Sigmoid colon (tissue), 7 donors: ENCODE measurements at regions of chr17 and their contacts with region 1.

Region 1: GRCh38 chr17:40062329-40063186 is at the start of gene THRA:
- DNase-seq: peak; percentile 88
- H3K4me3 ChIP-seq: peak within 1 kb of the TSS; percentile 87 to 98 (median 95)
- H3K27ac ChIP-seq: peak within 1 kb of the TSS; percentile 96 to 99 (median 98)
- H3K4me1 ChIP-seq: peaks cover 0 to 84% (median 64%) of the 10 kb centered on the region in 4 donors
- H3K27me3 ChIP-seq: no peaks in the 10 kb centered on the region
- CTCF ChIP-seq: peak in 1 of 4 experiments; percentile 22
- EP300 ChIP-seq: no peak
- POLR2A ChIP-seq: no peak
- total RNA-seq, gene THRA: 78.8 to 86.1 (median 83.8) TPM

Region 2: GRCh38 chr17:39487946-39488345 is 574.6 kb before region 1 on chr17:
- intact Hi-C with region 1: no loop called
- DNase-seq: no peak
- H3K4me3 ChIP-seq: no peak overlapping the region
- H3K27ac ChIP-seq: no peak overlapping the region
- H3K4me1 ChIP-seq: no peaks in the 10 kb centered on the region
- H3K27me3 ChIP-seq: no peaks in the 10 kb centered on the region
- CTCF ChIP-seq: no peak
- EP300 ChIP-seq: no peak
- POLR2A ChIP-seq: no peak

Region 3: DNA sequence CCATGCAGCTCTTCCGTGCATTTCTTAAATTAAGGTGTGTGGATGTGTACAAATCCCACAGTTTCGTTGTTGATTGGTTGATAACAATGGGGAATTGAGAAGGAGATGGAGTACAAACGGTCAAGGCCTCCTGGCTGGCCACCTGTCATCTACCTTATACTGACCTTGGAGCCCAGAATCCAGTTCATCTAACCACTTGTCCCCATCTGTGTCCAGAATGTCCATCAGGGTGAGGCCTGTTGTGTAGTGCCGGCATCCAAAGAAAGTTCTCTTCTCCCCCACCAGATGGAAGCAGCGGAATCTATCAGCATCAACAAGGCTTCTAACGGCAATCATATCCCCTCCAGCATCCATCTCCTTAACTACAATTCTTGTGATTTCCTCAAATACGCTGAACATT is 145.6 kb before region 1 on chr17:
- intact Hi-C with region 1: no loop called
- DNase-seq: no peak
- H3K4me3 ChIP-seq: no peak overlapping the region
- H3K27ac ChIP-seq: no peak overlapping the region
- H3K4me1 ChIP-seq: no peaks in the 10 kb centered on the region
- H3K27me3 ChIP-seq: no peaks in the 10 kb centered on the region
- CTCF ChIP-seq: no peak
- EP300 ChIP-seq: no peak
- POLR2A ChIP-seq: no peak

Region 4: DNA sequence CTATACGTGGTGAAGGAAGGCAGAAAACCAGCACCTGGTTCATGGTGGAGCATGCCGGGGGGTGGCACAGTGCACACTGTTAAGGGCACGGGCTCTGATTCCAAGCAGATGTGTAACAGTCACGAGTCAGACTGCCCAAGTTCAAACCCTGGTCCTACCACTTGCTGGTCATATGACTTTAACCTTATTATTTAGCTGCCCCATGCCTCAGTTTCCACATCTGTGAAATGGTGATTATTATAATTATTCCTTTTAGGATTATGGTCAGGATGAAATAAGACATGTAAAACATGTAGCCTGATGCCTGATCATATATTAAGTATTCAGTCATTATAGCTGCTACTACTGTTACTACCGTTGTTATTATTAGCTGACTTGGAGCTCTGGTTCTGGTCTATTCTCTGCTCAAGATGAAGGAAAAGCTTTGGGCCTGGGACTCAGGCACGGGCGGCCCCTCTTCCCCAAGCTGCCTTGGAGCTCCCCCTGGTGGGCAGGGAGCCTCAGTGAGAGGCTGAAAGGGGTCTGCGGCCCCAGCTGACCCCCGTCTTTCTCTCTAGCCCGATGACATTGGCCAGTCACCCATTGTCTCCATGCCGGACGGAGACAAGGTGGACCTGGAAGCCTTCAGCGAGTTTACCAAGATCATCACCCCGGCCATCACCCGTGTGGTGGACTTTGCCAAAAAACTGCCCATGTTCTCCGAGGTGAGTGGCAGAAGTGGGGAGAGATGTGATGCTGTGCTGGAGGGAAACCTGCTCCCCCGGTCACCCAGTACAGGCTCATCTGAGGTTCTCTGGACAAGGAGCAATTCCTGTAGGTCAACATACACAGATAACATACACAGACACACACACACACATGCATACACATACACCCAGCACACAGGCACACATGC is 23.8 kb after region 1 on chr17:
- intact Hi-C with region 1: loop called (anchors 2 kb)
- DNase-seq: no peak
- H3K4me3 ChIP-seq: no peak overlapping the region
- H3K27ac ChIP-seq: peak overlapping the region; percentile 21 to 100 (median 69)
- H3K4me1 ChIP-seq: peaks cover 0 to 43% (median 37%) of the 10 kb centered on the region in 4 donors
- H3K27me3 ChIP-seq: no peaks in the 10 kb centered on the region
- CTCF ChIP-seq: peak; percentile 86 to 93 (median 90)
- EP300 ChIP-seq: no peak
- POLR2A ChIP-seq: no peak

Region 5: DNA sequence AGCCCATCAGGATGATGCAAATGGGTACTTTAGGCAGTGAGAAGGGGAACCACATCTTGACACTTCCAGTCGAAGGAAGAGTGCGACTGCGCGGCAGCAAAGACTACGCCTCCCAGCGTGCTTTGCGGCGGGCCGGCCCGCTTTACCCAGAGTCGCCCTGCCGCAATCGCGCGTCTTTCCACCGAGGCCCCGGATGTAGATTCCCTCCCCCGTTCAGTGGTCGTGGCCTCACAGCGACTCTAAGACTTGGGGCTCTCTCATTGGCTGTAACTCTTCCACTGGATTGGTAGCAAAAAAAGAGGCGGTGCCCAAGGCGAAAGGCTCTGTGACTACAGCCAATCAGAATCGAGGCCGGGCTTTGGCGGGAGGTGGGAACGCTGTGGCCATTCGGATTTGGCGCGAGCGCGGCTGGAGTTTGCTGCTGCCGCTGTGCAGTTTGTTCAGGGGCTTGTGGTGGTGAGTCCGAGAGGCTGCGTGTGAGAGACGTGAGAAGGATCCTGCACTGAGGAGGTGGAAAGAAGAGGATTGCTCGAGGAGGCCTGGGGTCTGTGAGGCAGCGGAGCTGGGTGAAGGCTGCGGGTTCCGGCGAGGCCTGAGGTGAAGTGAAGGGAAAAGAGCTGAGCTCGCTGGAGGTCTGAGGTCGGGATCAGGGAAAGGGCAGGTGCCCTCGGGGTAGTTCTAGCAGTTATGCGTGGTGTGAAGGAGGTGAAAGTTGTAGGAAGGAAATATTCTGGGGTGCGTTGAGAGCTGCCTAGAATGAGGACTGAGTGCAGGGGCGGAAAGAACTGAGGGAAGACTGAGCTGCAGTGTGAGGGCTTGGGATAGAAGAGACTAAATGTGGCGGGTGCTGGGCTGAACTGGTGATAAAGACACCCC is 225.2 kb after region 1 on chr17 and contains the start of gene CDC6:
- intact Hi-C with region 1: no loop called
- DNase-seq: peak; percentile 99
- H3K4me3 ChIP-seq: peak within 1 kb of the TSS; percentile 26 to 50 (median 46)
- H3K27ac ChIP-seq: peak within 1 kb of the TSS; percentile 41 to 43 (median 42)
- H3K4me1 ChIP-seq: peaks cover 0 to 28% (median 16%) of the 10 kb centered on the region in 4 donors
- H3K27me3 ChIP-seq: no peaks in the 10 kb centered on the region
- CTCF ChIP-seq: no peak
- EP300 ChIP-seq: peak in 1 of 4 donors; percentile 50
- POLR2A ChIP-seq: no peak
- total RNA-seq, gene CDC6: 0.33 to 1.5 (median 0.83) TPM in 3 of 4 donors, not detected in the other